Heart right ventricle (tissue), 16 donors: ENCODE measurements at regions of chr20 and their contacts with region 1.

Region 1: GRCh38 chr20:8255945-8256632 is 124.0 kb downstream of the PLCB1 start:
- DNase-seq: no peak
- ATAC-seq: no peak
- H3K4me3 ChIP-seq: no peak overlapping the region
- H3K27ac ChIP-seq: no peak overlapping the region
- H3K4me1 ChIP-seq: no peaks in the 10 kb centered on the region
- H3K27me3 ChIP-seq: no peaks in the 10 kb centered on the region
- CTCF ChIP-seq: no peak

Region 2: DNA sequence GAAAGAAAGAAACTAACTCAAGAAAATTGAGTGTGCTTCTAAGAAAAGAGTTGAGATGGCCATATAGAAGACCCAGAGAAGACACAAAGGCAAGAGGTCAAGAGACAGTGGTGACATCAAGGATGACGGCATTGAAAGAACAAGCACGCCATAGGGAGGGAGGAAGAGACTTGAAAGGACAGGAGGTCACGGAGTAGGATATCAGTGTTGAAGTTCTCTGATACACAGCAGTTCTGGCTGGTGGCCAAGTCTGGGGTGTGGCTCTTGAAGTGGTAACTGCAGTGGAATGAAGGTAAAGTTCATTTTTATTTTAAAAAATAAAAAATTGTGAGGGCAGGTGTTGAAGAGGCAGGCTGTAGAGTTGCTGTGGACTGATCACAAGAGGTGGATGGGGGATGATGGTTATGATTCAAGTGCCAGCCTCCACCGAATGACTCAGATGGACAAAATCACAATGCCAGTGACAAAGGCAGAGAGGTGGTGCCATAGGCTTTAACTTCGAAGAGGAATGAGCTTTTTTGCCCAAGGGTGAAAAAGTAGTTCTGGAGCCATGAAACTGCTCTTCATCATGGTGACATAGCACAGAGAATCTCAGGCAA is 1541.8 kb before region 1 on chr20:
- intact Hi-C with region 1: loop called in 1 of 10 experiments (anchors 5 kb)
- DNase-seq: no peak
- ATAC-seq: no peak
- H3K4me3 ChIP-seq: no peak overlapping the region
- H3K27ac ChIP-seq: no peak overlapping the region
- H3K4me1 ChIP-seq: peaks cover 0 to 10% (median 0%) of the 10 kb centered on the region in 9 donors
- H3K27me3 ChIP-seq: no peaks in the 10 kb centered on the region
- CTCF ChIP-seq: no peak

Region 3: DNA sequence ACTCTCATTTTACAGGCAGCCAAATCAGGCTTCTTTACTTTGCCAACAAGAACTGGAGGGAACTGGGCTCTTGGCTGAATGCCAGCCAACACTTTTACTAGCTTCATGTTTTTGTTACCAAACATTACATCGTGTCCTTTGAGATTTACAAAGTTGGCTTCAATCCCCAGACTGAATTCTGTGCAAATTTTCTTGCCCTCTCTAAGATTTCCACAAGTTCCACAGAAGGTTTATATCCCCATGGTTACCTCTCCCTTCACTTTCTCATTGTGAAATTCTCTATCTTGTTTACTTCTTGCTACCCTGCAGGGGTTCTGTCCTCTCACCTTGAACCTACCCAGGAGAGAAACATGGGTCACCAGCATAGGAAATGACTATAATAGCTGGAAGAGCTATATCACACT is 161.7 kb before region 1 on chr20:
- intact Hi-C with region 1: no loop called
- DNase-seq: peak; percentile 22 to 71
- ATAC-seq: peak in 6 of 8 donors; percentile 44 to 77 (median 58)
- H3K4me3 ChIP-seq: no peak overlapping the region
- H3K27ac ChIP-seq: no peak overlapping the region
- H3K4me1 ChIP-seq: peaks cover 0 to 15% (median 12%) of the 10 kb centered on the region in 9 donors
- H3K27me3 ChIP-seq: peaks cover 0 to 5% (median 0%) of the 10 kb centered on the region in 7 donors
- CTCF ChIP-seq: no peak